ENCODE measurements at regions of chr12 and their contacts with region 1.

Region 1: GRCh38 chr12:101759396-101760047 is 20.3 kb upstream of the SYCP3 start:
- DNase-seq: peak in 1 of 4 donors; percentile 17
- ATAC-seq: peak; percentile 74
- H3K4me3 ChIP-seq: no peak overlapping the region
- H3K27ac ChIP-seq: no peak overlapping the region
- H3K4me1 ChIP-seq: no peaks in the 10 kb centered on the region
- H3K27me3 ChIP-seq: no peaks in the 10 kb centered on the region
- CTCF ChIP-seq: peak; percentile 66 to 88 (median 82)
- POLR2A ChIP-seq: no peak

Region 2: DNA sequence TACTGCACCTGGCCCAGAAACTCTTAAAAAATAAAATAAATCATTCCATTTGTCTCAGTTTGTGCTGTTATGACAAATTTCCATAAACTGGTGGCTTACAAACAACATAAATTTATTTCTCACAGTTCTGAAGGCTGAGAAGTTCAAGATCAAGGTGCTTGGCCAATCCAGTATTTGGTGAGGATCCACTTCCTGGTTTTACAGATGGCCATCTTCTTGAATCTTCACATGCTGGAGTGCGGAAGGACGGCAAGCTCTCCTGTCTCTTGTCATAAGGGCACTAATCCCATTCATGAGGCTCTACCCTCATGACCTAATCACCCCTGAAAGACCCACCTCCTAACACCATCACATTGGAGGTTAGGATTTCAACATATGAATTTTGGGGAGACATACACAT is 194.6 kb before region 1 on chr12:
- intact Hi-C with region 1: loop called (anchors 10 kb)
- DNase-seq: peak in 2 of 4 donors; percentile 7 to 11
- ATAC-seq: no peak
- H3K4me3 ChIP-seq: no peak overlapping the region
- H3K27ac ChIP-seq: no peak overlapping the region
- H3K4me1 ChIP-seq: peaks cover 1% of the 10 kb centered on the region
- H3K27me3 ChIP-seq: no peaks in the 10 kb centered on the region
- CTCF ChIP-seq: no peak
- POLR2A ChIP-seq: no peak

Region 3: DNA sequence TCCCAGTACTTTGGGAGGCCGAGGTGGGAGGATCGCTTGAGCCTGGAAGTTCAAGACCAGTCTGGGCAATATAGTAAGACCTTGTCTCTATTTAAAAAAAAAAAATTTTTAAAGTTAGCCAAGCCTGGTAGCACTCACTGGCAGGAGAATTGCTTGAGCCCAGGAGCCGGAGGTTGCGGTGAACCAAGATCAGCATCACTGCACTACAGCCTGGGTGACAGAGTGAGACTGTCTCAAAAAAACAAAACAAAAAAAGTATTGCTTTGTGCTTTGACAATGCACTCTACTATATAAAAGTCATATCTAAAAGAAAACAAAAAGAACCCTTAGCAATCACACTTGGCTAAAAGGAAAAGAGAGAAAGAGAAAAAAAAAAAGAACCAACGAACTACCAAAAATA is 44.5 kb after region 1 on chr12:
- intact Hi-C with region 1: no loop called
- DNase-seq: no peak
- ATAC-seq: no peak
- H3K4me3 ChIP-seq: no peak overlapping the region
- H3K27ac ChIP-seq: no peak overlapping the region
- H3K4me1 ChIP-seq: no peaks in the 10 kb centered on the region
- H3K27me3 ChIP-seq: no peaks in the 10 kb centered on the region
- CTCF ChIP-seq: no peak
- POLR2A ChIP-seq: no peak

Measured in body of pancreas (tissue), 4 donors.